Naive thymus-derived CD4-positive, alpha-beta T cell (primary cell): ENCODE measurements at regions of chrX and their contacts with region 1.

Region 1: GRCh38 chrX:132046533-132046932 is 23.4 kb downstream of the STK26 start:
- DNase-seq: no peak
- ATAC-seq: no peak
- H3K4me3 ChIP-seq: no peak overlapping the region
- H3K4me3 Mint-ChIP-seq: no peak overlapping the region
- H3K27ac ChIP-seq: no peak overlapping the region
- H3K27ac Mint-ChIP-seq: no peak overlapping the region
- H3K4me1 ChIP-seq: no peaks in the 10 kb centered on the region
- H3K4me1 Mint-ChIP-seq: peaks cover 3 to 72% (median 53%) of the 10 kb centered on the region in 7 donors
- H3K27me3 ChIP-seq: no peaks in the 10 kb centered on the region
- H3K27me3 Mint-ChIP-seq: no peaks in the 10 kb centered on the region

Region 2: GRCh38 chrX:131901546-131901945 is 145.0 kb before region 1 on chrX:
- CTCF ChIA-PET with region 1: no interaction called
- POLR2A ChIA-PET with region 1: no interaction called
- intact Hi-C with region 1: no loop called
- DNase-seq: no peak
- ATAC-seq: no peak
- H3K4me3 ChIP-seq: no peak overlapping the region
- H3K4me3 Mint-ChIP-seq: no peak overlapping the region
- H3K27ac ChIP-seq: no peak overlapping the region
- H3K27ac Mint-ChIP-seq: no peak overlapping the region
- H3K4me1 ChIP-seq: no peaks in the 10 kb centered on the region
- H3K4me1 Mint-ChIP-seq: peaks cover 0 to 2% (median 0%) of the 10 kb centered on the region in 7 donors
- H3K27me3 ChIP-seq: no peaks in the 10 kb centered on the region
- H3K27me3 Mint-ChIP-seq: no peaks in the 10 kb centered on the region

Region 3: DNA sequence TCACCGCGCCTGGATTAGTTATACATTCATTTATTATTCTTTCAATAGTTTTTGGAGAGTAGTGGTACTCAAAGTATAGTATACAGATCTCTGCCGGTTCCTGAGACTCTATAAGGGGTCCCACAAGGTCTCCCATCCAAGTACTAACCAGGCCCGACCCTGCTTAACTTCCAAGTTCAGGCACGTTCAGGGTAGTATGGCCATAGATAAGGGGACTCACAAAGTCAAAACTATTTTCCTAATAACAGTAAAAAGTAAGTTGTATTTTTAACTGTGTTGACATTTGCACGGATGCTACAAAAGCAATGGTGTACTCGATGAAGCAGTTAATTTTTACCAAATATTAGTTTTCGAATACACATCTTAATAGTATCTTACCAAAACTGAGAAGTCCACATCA is 107.8 kb before region 1 on chrX:
- CTCF ChIA-PET with region 1: no interaction called
- POLR2A ChIA-PET with region 1: no interaction called
- intact Hi-C with region 1: no loop called
- DNase-seq: no peak
- ATAC-seq: no peak
- H3K4me3 ChIP-seq: no peak overlapping the region
- H3K4me3 Mint-ChIP-seq: no peak overlapping the region
- H3K27ac ChIP-seq: no peak overlapping the region
- H3K27ac Mint-ChIP-seq: no peak overlapping the region
- H3K4me1 ChIP-seq: no peaks in the 10 kb centered on the region
- H3K4me1 Mint-ChIP-seq: peaks cover 0 to 7% (median 0%) of the 10 kb centered on the region in 7 donors
- H3K27me3 ChIP-seq: no peaks in the 10 kb centered on the region
- H3K27me3 Mint-ChIP-seq: no peaks in the 10 kb centered on the region

Region 4: DNA sequence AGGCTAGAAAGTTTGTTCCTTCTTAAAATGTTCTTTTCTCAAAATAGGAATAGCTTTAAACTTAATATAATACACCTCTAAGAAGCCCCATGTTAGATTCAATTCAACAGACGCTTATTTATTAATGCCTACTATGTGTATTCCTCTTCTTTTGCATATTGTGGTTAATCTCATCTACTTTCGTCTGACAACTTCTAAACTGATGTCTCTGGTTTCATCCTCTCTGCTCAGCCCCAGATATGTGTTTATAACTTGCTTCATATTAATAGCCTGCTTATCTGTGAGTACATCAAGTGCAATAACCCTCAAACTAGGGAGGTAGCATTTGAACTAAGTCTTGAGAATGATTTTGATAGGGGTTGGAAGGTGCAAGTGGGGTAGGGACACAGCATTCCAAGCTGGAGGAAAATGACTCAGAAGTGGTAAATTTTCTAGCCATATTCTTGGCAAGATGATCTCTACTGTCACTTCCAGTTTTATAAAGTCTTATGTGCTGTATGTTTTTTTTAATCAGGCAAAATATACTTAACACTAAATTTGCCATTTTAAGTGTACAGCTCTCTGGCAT is 13.5 kb after region 1 on chrX:
- CTCF ChIA-PET with region 1: no interaction called
- POLR2A ChIA-PET with region 1: no interaction called
- intact Hi-C with region 1: loop called in 1 of 2 experiments (anchors 2 kb)
- DNase-seq: no peak
- ATAC-seq: no peak
- H3K4me3 ChIP-seq: no peak overlapping the region
- H3K4me3 Mint-ChIP-seq: no peak overlapping the region
- H3K27ac ChIP-seq: no peak overlapping the region
- H3K27ac Mint-ChIP-seq: peak overlapping the region in 4 of 9 donors; percentile 2 to 57 (median 51)
- H3K4me1 ChIP-seq: no peaks in the 10 kb centered on the region
- H3K4me1 Mint-ChIP-seq: peaks cover 0 to 42% (median 20%) of the 10 kb centered on the region in 7 donors
- H3K27me3 ChIP-seq: no peaks in the 10 kb centered on the region
- H3K27me3 Mint-ChIP-seq: no peaks in the 10 kb centered on the region

Region 5: DNA sequence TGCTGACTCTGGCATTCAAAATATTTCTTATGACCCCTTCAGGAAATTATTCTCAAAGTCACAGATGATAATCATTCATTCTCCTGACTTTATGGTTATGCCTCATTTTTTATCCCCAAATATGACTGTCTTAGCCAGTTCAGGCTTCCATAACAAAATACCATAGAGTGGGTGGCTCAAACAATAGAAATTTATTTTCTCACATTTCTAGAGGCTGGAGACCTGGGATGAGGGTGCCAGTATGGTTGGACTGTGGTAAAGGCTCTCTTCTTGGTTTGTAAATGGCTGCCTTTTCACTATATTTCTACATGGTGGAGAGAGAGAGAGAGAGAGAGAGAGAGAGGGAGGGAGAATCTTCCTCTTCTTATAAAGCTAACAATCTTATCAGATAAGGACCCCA is 60.8 kb after region 1 on chrX:
- CTCF ChIA-PET with region 1: no interaction called
- POLR2A ChIA-PET with region 1: no interaction called
- intact Hi-C with region 1: no loop called
- DNase-seq: no peak
- ATAC-seq: no peak
- H3K4me3 ChIP-seq: no peak overlapping the region
- H3K4me3 Mint-ChIP-seq: no peak overlapping the region
- H3K27ac ChIP-seq: no peak overlapping the region
- H3K27ac Mint-ChIP-seq: no peak overlapping the region
- H3K4me1 ChIP-seq: no peaks in the 10 kb centered on the region
- H3K4me1 Mint-ChIP-seq: no peaks in the 10 kb centered on the region
- H3K27me3 ChIP-seq: no peaks in the 10 kb centered on the region
- H3K27me3 Mint-ChIP-seq: peaks cover 0 to 6% (median 0%) of the 10 kb centered on the region in 5 donors